ENCODE measurements at regions of chr14 and their contacts with region 1.

Region 1: GRCh38 chr14:93115069-93115820 is 480 bp downstream of the ITPK1 start:
- DNase-seq: peak; percentile 51
- ATAC-seq: peak; percentile 83
- H3K4me3 ChIP-seq: peak overlapping the region; percentile 73 to 92
- H3K27ac ChIP-seq: peak overlapping the region; percentile 90
- H3K4me1 ChIP-seq: peaks cover 16 to 34% of the 10 kb centered on the region in 2 experiments; a peak in 3 of 4 replicates
- H3K27me3 ChIP-seq: no peaks in the 10 kb centered on the region
- CTCF ChIP-seq: no peak
- POLR2A ChIP-seq: no peak
- RAD21 ChIP-seq: no peak

Region 2: GRCh38 chr14:93103392-93104080 is 11.7 kb before region 1 on chr14:
- CTCF ChIA-PET with region 1: interaction called, 19 read pairs
- POLR2A ChIA-PET with region 1: interaction called, 4 read pairs
- RAD21 ChIA-PET with region 1: no interaction called
- intact Hi-C with region 1: no loop called
- DNase-seq: no peak
- ATAC-seq: 0 out of 2 replicates have a peak, but pooled peaks have one; percentile 33
- H3K4me3 ChIP-seq: no peak overlapping the region
- H3K27ac ChIP-seq: no peak overlapping the region
- H3K4me1 ChIP-seq: peaks cover 24 to 41% of the 10 kb centered on the region in 2 experiments
- H3K27me3 ChIP-seq: no peaks in the 10 kb centered on the region
- CTCF ChIP-seq: no peak
- POLR2A ChIP-seq: no peak
- RAD21 ChIP-seq: no peak

Region 3: DNA sequence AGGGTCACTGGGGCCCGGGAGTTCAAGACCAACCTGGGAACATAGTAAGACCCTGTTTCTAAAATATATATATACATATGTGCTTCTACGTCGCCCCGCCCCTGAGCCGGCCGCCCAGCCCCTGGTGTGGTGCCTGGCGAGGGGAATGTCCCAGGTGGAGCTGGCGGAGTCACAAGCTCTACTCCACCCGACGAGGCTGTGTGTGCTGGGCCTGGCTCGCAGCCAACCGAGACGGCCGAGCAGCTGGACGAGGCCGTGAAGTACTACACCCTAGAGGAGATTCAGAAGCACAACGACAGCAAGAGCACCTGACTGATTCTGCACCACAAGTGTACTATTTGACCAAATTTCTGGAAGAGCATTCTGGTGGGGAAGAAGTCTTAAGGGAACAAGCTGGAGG is 22.6 kb after region 1 on chr14:
- CTCF ChIA-PET with region 1: interaction called, 46 read pairs
- POLR2A ChIA-PET with region 1: interaction called, 6 read pairs
- RAD21 ChIA-PET with region 1: interaction called, 4 to 9 read pairs
- intact Hi-C with region 1: loop called (anchors 1 kb)
- DNase-seq: no peak
- ATAC-seq: no peak
- H3K4me3 ChIP-seq: no peak overlapping the region
- H3K27ac ChIP-seq: no peak overlapping the region
- H3K4me1 ChIP-seq: peaks cover 0 to 4% of the 10 kb centered on the region in 2 experiments; a peak in 2 of 4 replicates
- H3K27me3 ChIP-seq: no peaks in the 10 kb centered on the region
- CTCF ChIP-seq: 0 out of 6 replicates have a peak, but pooled peaks of 1 of the 3 experiments have one; percentile 4
- POLR2A ChIP-seq: no peak
- RAD21 ChIP-seq: no peak

Region 4: GRCh38 chr14:93173943-93174395 is 58.7 kb after region 1 on chr14:
- CTCF ChIA-PET with region 1: interaction called, 13 read pairs
- POLR2A ChIA-PET with region 1: no interaction called
- RAD21 ChIA-PET with region 1: no interaction called
- intact Hi-C with region 1: loop called (anchors 2 kb)
- DNase-seq: no peak
- ATAC-seq: no peak
- H3K4me3 ChIP-seq: no peak overlapping the region
- H3K27ac ChIP-seq: no peak overlapping the region
- H3K4me1 ChIP-seq: peaks cover 3 to 6% of the 10 kb centered on the region in 2 experiments; a peak in 2 of 4 replicates
- H3K27me3 ChIP-seq: no peaks in the 10 kb centered on the region
- CTCF ChIP-seq: no peak
- POLR2A ChIP-seq: no peak
- RAD21 ChIP-seq: no peak

Region 5: GRCh38 chr14:93206793-93207467 is 91.7 kb after region 1 on chr14 and contains the starts of genes GON7 and UBR7:
- CTCF ChIA-PET with region 1: interaction called, 14 read pairs
- POLR2A ChIA-PET with region 1: interaction called, 3 read pairs
- RAD21 ChIA-PET with region 1: interaction called in 1 of 2 experiments, 5 read pairs
- intact Hi-C with region 1: loop called (anchors 5 kb)
- DNase-seq: peak; percentile 93
- ATAC-seq: peak; percentile 92
- H3K4me3 ChIP-seq: peak within 1 kb of the TSS; percentile 74 to 97
- H3K27ac ChIP-seq: peak within 1 kb of the TSS; percentile 83
- H3K4me1 ChIP-seq: peaks cover 7 to 30% of the 10 kb centered on the region in 2 experiments
- H3K27me3 ChIP-seq: no peaks in the 10 kb centered on the region
- CTCF ChIP-seq: 0 out of 6 replicates have a peak, but pooled peaks of 1 of the 3 experiments have one; percentile 22
- POLR2A ChIP-seq: peak; percentile 51
- RAD21 ChIP-seq: no peak
- total RNA-seq, gene GON7: 11.2 TPM
- total RNA-seq, gene UBR7: 23.9 TPM

Region 6: DNA sequence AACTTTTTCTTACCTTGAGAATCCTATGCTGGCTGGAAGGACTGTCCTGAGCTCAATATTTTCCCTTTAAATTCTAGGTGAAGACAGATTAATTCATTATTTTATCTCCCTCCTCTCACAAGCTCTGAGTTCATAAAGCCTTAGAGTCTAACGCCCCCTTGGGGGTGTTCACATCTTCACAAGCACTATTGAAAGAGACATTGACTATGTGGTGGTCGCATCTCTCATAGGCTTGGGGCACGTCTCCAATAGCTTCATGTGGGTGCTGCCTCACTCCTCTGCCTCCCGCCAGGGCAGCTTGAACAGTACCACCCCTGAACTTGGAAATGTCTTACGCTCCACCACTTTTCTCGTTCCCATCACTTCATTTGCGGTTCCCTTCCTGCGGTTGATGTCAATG is 421.7 kb after region 1 on chr14:
- CTCF ChIA-PET with region 1: interaction called, 10 read pairs
- POLR2A ChIA-PET with region 1: no interaction called
- RAD21 ChIA-PET with region 1: no interaction called
- intact Hi-C with region 1: no loop called
- DNase-seq: peak; percentile 21
- ATAC-seq: peak; percentile 53
- H3K4me3 ChIP-seq: no peak overlapping the region
- H3K27ac ChIP-seq: no peak overlapping the region
- H3K4me1 ChIP-seq: no peaks in the 10 kb centered on the region
- H3K27me3 ChIP-seq: peaks cover 6% of the 10 kb centered on the region
- CTCF ChIP-seq: peak; percentile 15 to 26 (median 17); a peak in 3 of 6 replicates
- POLR2A ChIP-seq: no peak
- RAD21 ChIP-seq: peak; percentile 58

Measured in HCT116 (cell line).